ENCODE measurements at regions of chr22 and their contacts with region 1.

Region 1: GRCh38 chr22:35840302-35840739 is 122.6 kb downstream of the APOL5 start:
- DNase-seq: peak; percentile 87 to 95
- ATAC-seq: peak; percentile 90
- H3K4me3 ChIP-seq: peak overlapping the region; percentile 70 to 81
- H3K27ac ChIP-seq: no peak overlapping the region
- H3K4me1 ChIP-seq: peaks cover 5 to 13% of the 10 kb centered on the region in 2 donors
- H3K27me3 ChIP-seq: no peaks in the 10 kb centered on the region

Region 2: DNA sequence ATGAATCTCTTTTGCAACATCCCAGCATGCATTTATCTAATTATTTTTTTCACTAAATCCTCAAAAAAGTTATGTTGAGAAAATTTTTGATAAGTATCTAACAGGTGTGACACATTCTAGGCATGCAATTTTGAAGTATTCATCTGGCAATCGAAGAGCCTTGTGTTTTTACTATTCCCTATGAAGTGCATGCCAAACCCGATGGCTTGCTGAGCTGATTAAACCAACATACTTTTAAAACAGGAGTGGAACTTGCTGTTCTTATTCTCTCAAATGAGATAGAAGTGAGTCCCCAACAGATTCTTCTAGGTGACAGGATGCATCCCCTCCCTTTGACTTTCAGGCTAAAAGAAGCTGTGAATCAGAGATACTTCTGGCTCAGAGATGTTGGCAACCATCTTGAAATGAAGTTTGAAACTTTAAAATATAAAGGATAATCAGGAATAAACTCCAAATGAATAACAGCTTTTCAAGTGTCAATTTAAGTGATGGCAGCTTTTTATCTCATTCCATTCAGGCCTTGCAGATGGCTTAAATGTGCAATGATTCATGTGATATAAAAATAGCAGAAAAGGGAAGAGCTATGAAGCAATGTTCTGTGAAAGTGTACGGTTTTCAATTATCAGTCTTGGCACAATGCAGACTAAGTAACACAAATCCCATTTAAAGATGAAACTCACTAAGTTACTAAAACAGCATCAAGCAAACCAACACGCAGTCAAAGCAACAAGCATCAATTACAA is 55.0 kb before region 1 on chr22:
- intact Hi-C with region 1: loop called in 1 of 2 experiments (anchors 10 kb)
- DNase-seq: no peak
- ATAC-seq: no peak
- H3K4me3 ChIP-seq: no peak overlapping the region
- H3K27ac ChIP-seq: no peak overlapping the region
- H3K4me1 ChIP-seq: peaks cover 4 to 7% of the 10 kb centered on the region in 2 donors
- H3K27me3 ChIP-seq: no peaks in the 10 kb centered on the region

Region 3: DNA sequence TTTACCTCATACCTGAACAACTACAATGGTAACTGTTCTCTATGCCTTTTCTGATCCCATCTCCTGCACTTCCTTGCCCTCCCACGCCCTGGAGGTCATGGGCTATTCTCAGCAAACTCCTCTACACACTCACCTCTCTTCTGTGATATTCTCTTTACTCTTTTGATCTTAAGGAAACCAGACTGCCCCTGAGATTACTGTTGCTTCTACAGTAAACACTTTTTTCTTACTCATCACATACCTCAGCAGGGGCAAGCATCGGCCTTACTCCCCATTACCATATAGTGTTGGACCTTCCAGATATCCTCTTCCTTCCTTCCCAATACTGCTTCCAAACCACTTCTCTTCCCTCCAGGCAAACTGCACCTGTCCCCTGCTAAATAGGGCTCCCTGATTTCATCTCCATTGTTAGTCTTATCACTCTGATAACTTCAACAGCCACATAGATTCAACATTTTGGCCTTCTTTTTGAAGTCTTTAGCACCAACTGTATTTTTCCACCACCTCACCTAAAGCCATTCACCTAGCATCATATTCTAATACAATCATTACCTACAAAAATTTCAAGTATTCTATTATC is 47.1 kb after region 1 on chr22:
- intact Hi-C with region 1: loop called in 1 of 2 experiments (anchors 5 kb)
- DNase-seq: no peak
- ATAC-seq: no peak
- H3K4me3 ChIP-seq: no peak overlapping the region
- H3K27ac ChIP-seq: no peak overlapping the region
- H3K4me1 ChIP-seq: peaks cover 11 to 18% of the 10 kb centered on the region in 2 donors
- H3K27me3 ChIP-seq: no peaks in the 10 kb centered on the region

Region 4: GRCh38 chr22:35914665-35915476 is 74.5 kb after region 1 on chr22:
- intact Hi-C with region 1: loop called in 1 of 2 experiments (anchors 5 kb)
- DNase-seq: peak in 1 of 2 donors; percentile 61
- ATAC-seq: peak; percentile 89
- H3K4me3 ChIP-seq: peak overlapping the region; percentile 58 to 86
- H3K27ac ChIP-seq: peak overlapping the region; percentile 39 to 82
- H3K4me1 ChIP-seq: peaks cover 0 to 9% of the 10 kb centered on the region in 2 donors
- H3K27me3 ChIP-seq: no peaks in the 10 kb centered on the region